ENCODE measurements at regions of chr17 and their contacts with region 1.

Region 1: GRCh38 chr17:40362696-40363110 is 1.8 kb downstream of the GJD3 start:
- DNase-seq: peak; percentile 82 to 86 (median 84)
- ATAC-seq: peak; percentile 72 to 79 (median 76)
- H3K4me3 ChIP-seq: peak overlapping the region; percentile 49 to 64 (median 55)
- H3K27ac ChIP-seq: no peak overlapping the region
- H3K4me1 ChIP-seq: peaks cover 0 to 6% (median 1%) of the 10 kb centered on the region in 4 donors
- H3K27me3 ChIP-seq: no peaks in the 10 kb centered on the region
- CTCF ChIP-seq: peak; percentile 61 to 73 (median 64)
- POLR2A ChIP-seq: peak; percentile 60

Region 2: GRCh38 chr17:40309031-40309948 is 53.4 kb before region 1 on chr17 and contains the start of gene RARA:
- intact Hi-C with region 1: loop called in 1 of 2 experiments (anchors 5 kb)
- DNase-seq: peak; percentile 24 to 71 (median 55)
- ATAC-seq: peak; percentile 26 to 60 (median 42)
- H3K4me3 ChIP-seq: peak within 1 kb of the TSS; percentile 18 to 51 (median 21)
- H3K27ac ChIP-seq: peak within 1 kb of the TSS in 2 of 3 donors; percentile 13 to 37
- H3K4me1 ChIP-seq: peaks cover 0 to 56% (median 28%) of the 10 kb centered on the region in 4 donors
- H3K27me3 ChIP-seq: no peaks in the 10 kb centered on the region
- CTCF ChIP-seq: no peak
- POLR2A ChIP-seq: no peak
- total RNA-seq, gene RARA: 17.7 to 41.9 (median 22.9) TPM

Region 3: GRCh38 chr17:40417609-40418427 is 55.1 kb after region 1 on chr17 and contains the start of gene TOP2A:
- intact Hi-C with region 1: loop called in 1 of 2 experiments (anchors 5 kb)
- DNase-seq: peak; percentile 84 to 99 (median 90)
- ATAC-seq: peak; percentile 95 to 98 (median 98)
- H3K4me3 ChIP-seq: peak within 1 kb of the TSS; percentile 42 to 62 (median 52)
- H3K27ac ChIP-seq: no peak within 1 kb of the TSS
- H3K4me1 ChIP-seq: peaks cover 0 to under 1% (median 0%) of the 10 kb centered on the region in 4 donors
- H3K27me3 ChIP-seq: no peaks in the 10 kb centered on the region
- CTCF ChIP-seq: no peak
- POLR2A ChIP-seq: no peak
- total RNA-seq, gene TOP2A: 0.22 to 7.3 (median 3.0) TPM

Region 4: GRCh38 chr17:40485851-40486512 is 123.3 kb after region 1 on chr17:
- intact Hi-C with region 1: loop called in 1 of 2 experiments (anchors 10 kb)
- DNase-seq: no peak
- ATAC-seq: peak in 1 of 4 donors; percentile 32
- H3K4me3 ChIP-seq: no peak overlapping the region
- H3K27ac ChIP-seq: no peak overlapping the region
- H3K4me1 ChIP-seq: no peaks in the 10 kb centered on the region
- H3K27me3 ChIP-seq: no peaks in the 10 kb centered on the region
- CTCF ChIP-seq: no peak
- POLR2A ChIP-seq: no peak